Calu3 (cell line): ENCODE measurements at regions of chr12 and their contacts with region 1.

Region 1: DNA sequence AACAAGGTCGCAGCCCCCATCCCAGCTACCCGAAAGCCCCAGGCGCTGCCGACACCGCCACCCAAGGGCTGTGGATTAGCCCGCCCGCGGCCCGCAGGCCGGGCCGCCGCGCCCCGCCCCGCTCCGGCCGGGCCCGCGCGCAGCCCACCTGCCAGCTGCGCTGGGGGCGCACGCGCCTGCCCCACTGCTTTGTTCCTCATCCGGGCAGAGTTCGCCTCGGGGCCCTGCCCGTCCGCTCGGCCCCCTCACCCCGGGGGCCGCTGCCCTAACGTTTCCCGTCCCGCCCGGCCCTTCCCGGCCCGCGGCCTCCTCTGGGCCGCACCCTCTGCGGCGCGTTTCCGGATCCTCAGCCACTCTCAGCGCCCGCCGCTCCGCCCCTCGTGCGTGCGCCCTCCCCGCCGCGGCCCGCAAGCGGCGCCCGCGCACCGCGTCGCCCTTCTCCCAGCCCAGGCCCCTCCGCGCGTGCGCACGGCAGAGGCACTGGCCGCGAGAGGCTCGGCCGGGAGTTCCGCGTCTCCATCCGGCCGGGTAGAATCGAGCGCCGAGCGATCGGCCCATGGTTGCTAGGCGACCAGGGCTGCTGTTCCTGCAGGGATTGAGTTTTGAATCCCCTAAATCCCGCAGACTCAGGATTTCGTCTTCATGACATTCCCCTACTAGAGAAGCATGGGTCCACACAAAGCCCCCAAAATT is at the start of gene PRDM4:
- DNase-seq: peak; percentile 96
- H3K4me3 Mint-ChIP-seq: peak within 1 kb of the TSS; percentile 85
- H3K27ac Mint-ChIP-seq: peak within 1 kb of the TSS; percentile 70
- H3K4me1 Mint-ChIP-seq: peaks cover 8% of the 10 kb centered on the region
- H3K27me3 Mint-ChIP-seq: no peaks in the 10 kb centered on the region
- CTCF ChIP-seq: no peak
- total RNA-seq, gene PRDM4: 24.3 and 25.2 TPM in 2 replicates

Region 2: DNA sequence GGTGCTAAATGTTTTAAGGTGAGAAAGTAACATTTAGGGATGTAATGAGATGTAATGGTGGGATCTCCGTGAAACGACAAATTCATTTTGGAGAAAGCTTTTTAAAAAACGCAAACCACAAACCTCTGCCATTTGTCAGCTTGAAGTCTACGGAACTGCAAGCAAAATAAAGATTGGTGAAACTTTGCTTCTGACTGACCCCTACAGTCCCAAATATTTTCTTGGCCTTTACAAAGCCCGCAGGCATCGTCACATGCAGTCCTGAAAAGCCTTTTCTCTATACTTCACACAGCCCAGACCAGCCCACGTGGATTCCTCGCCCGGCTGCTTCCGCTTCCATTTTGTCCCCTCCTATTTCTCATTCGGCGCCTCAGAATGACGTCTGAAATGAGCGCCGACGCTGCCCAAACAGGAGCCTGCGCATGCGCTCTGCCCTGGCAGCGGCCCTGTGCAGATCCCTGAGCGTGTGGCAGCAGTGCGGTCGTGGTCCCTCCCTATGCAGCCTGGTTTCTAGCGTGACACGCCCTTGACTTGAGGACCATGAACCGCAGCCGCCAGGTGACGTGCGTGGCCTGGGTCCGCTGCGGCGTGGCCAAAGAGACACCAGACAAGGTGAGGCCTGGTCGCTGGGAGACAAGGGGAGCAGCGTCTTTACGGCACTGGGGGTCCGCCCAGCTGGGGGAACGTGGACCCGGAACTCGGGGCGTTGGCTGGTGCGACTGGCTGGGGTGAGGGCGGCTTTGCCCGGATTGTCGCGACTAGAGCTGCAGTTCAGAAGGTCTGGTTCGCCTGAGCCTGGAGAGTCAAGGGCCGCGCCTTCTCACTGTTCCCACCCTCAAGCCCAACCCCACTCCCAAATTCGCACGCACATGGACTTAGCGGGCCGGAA is 75.4 kb before region 1 on chr12 and contains the start of gene PWP1:
- CTCF ChIA-PET with region 1: no interaction called
- intact Hi-C with region 1: loop called (anchors 5 kb)
- DNase-seq: peak; percentile 96
- H3K4me3 Mint-ChIP-seq: peak within 1 kb of the TSS; percentile 94
- H3K27ac Mint-ChIP-seq: peak within 1 kb of the TSS; percentile 96
- H3K4me1 Mint-ChIP-seq: no peaks in the 10 kb centered on the region
- H3K27me3 Mint-ChIP-seq: peaks cover 6% of the 10 kb centered on the region
- CTCF ChIP-seq: no peak
- total RNA-seq, gene PWP1: 52.7 and 60.5 TPM in 2 replicates

Region 3: GRCh38 chr12:107718606-107719005 is 42.3 kb before region 1 on chr12:
- CTCF ChIA-PET with region 1: no interaction called
- intact Hi-C with region 1: no loop called
- DNase-seq: no peak
- H3K4me3 Mint-ChIP-seq: no peak overlapping the region
- H3K27ac Mint-ChIP-seq: no peak overlapping the region
- H3K4me1 Mint-ChIP-seq: no peaks in the 10 kb centered on the region
- H3K27me3 Mint-ChIP-seq: no peaks in the 10 kb centered on the region
- CTCF ChIP-seq: no peak

Region 4: GRCh38 chr12:107884769-107885694 is 124.1 kb after region 1 on chr12:
- CTCF ChIA-PET with region 1: no interaction called
- intact Hi-C with region 1: loop called (anchors 2 kb)
- DNase-seq: peak; percentile 59
- H3K4me3 Mint-ChIP-seq: no peak overlapping the region
- H3K27ac Mint-ChIP-seq: no peak overlapping the region
- H3K4me1 Mint-ChIP-seq: no peaks in the 10 kb centered on the region
- H3K27me3 Mint-ChIP-seq: peaks cover 79% of the 10 kb centered on the region
- CTCF ChIP-seq: peak; percentile 77